ENCODE measurements at regions of chr18 and their contacts with region 1.

Region 1: DNA sequence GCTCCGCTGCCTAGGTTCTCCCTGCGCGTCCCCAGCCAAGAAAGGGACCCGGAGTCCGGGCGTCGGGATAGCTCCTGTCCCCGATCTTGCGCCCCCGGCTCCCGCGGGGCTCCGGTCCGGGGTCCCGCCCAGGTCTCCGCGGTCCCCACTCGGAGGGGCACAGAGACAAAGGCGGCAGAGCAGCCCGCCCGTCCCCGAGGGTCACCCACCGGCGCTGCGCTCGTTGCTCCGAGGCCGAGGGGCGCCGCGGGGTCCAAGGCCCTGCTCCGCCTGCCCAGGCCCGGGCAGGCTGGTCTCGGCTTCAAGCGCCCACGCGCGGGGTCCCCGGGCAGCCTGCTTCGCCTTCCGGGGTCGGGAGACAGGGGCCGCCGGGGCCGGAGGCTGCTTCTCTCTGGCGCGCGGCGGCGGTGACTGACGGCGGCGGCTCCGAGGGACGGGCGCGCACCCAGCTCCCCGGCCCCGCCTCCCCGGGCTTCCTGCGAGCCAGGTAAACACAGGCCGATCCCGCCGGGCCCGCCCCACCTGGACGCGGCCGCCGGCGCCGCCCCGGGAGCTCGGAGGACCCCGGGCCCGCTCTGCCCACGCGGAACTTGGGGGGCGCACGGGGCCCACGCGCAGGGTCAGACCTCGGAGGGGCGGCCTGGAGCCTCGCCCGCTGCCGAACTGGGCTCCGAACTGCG is at the start of gene MBP:
- DNase-seq: peak; percentile 91
- total RNA-seq, gene MBP: 37.7 TPM

Region 2: GRCh38 chr18:77000527-77000926 is 132.0 kb before region 1 on chr18:
- intact Hi-C with region 1: loop called (anchors 10 kb)
- DNase-seq: no peak

Region 3: DNA sequence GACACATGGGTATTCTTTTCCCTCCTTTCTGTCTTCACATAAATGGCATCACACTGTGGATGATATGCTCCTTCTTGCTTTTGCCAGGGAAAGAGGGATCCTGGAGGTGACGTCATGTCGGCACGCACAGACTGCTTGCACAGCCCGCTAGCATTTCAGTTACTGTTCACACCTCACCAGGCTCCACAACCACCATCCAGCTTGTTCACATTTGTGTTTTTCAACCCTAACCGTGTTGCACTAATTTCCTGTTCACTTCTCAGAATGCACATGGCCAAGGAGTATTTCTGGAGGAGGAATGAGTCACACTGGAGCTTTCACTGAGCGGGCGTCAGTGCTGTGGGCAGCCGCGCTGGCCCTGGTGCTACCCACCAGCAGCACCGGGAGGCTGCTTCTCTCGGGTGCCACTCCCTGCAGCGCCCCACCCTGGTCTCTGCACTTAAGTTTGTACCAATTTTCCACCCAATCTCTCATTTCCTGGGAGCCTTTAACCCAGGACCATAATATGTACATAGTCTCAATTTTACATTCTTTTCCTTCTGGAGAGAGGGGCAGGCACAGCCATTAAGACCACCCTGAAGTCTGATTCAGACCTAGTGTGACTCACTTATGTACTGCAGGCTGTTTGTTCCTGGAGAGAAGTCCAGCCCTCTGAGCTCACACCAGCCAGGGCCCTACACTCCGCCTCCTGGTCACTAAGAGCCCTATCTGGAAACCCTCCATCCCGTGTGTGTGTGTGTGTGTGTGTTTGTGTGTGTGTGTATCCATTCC is 65.0 kb before region 1 on chr18:
- intact Hi-C with region 1: loop called (anchors 5 kb)
- DNase-seq: no peak

Region 4: DNA sequence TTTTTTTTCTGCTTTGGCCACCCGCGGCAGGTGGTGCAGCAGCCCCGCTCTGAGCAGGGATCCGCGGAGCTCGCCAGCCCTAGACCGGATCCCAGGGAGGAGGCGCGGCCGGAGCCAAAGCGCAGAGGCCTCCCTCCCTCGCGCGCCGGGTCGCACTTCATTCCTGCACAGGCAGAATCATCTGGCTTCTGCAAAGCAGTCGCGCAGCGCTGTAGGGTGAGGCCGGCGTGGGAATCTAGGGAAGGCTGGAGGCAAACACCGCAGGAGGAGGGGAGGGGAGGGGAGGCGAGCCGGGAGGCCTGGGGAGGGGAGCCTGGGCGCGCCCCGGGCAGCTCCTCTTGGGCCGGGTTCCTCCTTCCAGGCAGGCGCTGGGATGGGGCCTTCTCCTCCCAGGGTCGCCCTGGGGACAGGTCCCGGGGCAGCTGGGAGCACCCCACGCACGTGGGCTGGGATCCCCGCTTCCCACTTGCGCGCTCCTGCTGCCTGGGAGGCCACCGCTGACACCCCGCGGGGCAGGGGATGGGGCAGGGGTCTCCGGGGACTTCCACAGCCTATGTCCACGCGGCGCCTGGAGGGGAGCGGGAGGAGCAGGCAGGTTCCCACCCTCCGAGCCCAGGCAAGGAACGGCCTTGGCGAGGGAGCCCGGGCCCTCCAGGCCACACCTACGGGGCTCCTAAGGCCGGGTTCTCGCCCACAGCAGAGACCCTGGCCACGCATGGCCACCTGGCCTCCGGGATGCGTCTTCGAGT is 44.9 kb before region 1 on chr18:
- intact Hi-C with region 1: loop called (anchors 5 kb)
- DNase-seq: no peak

Region 5: GRCh38 chr18:77207540-77207939 is 75.0 kb after region 1 on chr18:
- intact Hi-C with region 1: loop called (anchors 5 kb)
- DNase-seq: no peak